ENCODE measurements at regions of chr5 and their contacts with region 1.

Region 1: GRCh38 chr5:77560677-77561263 is 68.7 kb upstream of the WDR41 start:
- DNase-seq: peak; percentile 58
- ATAC-seq: peak; percentile 54; the same call in 1 of the 2 replicates
- H3K4me3 ChIP-seq: no peak overlapping the region
- H3K27ac ChIP-seq: no peak overlapping the region
- H3K4me1 ChIP-seq: no peaks in the 10 kb centered on the region
- H3K27me3 ChIP-seq: peaks cover 6% of the 10 kb centered on the region; the same call in 1 of the 2 replicates
- CTCF ChIP-seq: peak; percentile 64

Region 2: GRCh38 chr5:78008356-78008967 is 447.7 kb after region 1 on chr5:
- CTCF ChIA-PET with region 1: no interaction called
- POLR2A ChIA-PET with region 1: no interaction called
- intact Hi-C with region 1: loop called (anchors 1 kb)
- DNase-seq: peak; percentile 56
- ATAC-seq: peak; percentile 55
- H3K4me3 ChIP-seq: no peak overlapping the region
- H3K27ac ChIP-seq: no peak overlapping the region
- H3K4me1 ChIP-seq: no peaks in the 10 kb centered on the region
- H3K27me3 ChIP-seq: no peaks in the 10 kb centered on the region
- CTCF ChIP-seq: peak; percentile 78

Region 3: DNA sequence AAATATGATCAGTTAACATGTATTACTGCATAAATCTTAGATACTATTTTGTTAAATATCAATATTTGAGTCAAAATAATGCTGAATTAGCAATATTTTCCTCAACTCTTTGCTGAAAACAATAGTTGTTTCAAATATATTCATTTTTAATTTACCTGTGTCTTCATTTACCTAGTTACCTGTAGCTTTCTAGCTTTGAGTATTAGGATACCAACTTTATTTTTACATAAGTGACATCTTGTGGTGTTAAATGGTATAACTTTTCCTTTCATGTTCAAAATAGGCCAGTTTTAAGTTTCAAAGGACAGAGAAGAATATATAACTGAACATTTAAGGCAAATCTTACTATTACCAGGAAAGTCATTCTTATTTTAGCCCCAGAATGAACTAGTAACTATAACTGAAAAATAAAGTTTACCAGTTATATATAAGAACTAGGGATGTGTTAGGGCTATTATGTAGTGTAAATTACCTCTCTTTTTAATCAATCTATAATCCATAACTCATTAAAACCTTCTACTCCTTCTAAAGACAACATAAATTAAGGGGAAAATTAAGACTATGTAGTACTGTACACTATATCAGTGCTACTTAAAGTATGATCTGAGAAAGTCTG is 708.4 kb after region 1 on chr5:
- CTCF ChIA-PET with region 1: no interaction called
- POLR2A ChIA-PET with region 1: no interaction called
- intact Hi-C with region 1: loop called (anchors 5 kb)
- DNase-seq: peak; percentile 34
- ATAC-seq: peak; percentile 43; the same call in 1 of the 2 replicates
- H3K4me3 ChIP-seq: no peak overlapping the region
- H3K27ac ChIP-seq: no peak overlapping the region
- H3K4me1 ChIP-seq: no peaks in the 10 kb centered on the region
- H3K27me3 ChIP-seq: no peaks in the 10 kb centered on the region
- CTCF ChIP-seq: peak; percentile 57